ENCODE measurements at regions of chr5 and their contacts with region 1.

Region 1: DNA sequence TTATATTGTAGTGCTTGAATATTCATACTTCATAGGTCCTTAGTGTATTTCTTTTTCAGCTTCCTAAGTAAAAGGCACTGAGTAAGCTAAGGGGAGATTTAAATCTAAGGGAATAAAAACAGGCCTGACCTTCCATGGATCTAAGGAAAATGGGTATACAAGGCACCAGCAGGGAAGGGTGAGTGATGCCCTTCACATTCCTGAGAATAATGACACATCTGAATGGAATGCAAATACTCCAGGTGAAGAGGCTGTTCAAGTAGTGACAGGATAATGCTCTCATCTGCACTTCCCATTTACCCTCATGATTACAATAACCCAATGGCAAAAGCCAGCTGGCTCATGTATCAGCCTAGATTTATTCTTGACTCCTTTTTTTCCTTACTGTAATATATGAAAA is 216.2 kb upstream of the ACTBL2 start:
- DNase-seq: no peak
- ATAC-seq: no peak
- H3K4me3 ChIP-seq: no peak overlapping the region
- H3K27ac ChIP-seq: peak overlapping the region in 11 of 12 donors; percentile 19 to 88 (median 76)
- H3K4me1 ChIP-seq: peaks cover 2 to 55% (median 30%) of the 10 kb centered on the region in 12 donors
- H3K27me3 ChIP-seq: no peaks in the 10 kb centered on the region
- CTCF ChIP-seq: no peak
- POLR2A ChIP-seq: no peak

Region 2: GRCh38 chr5:57650360-57651069 is 48.3 kb before region 1 on chr5:
- intact Hi-C with region 1: loop called in 1 of 10 experiments (anchors 2 kb)
- DNase-seq: no peak
- ATAC-seq: peak in 2 of 4 donors; percentile 50 to 61
- H3K4me3 ChIP-seq: no peak overlapping the region
- H3K27ac ChIP-seq: no peak overlapping the region
- H3K4me1 ChIP-seq: peaks cover 0 to 16% (median 0%) of the 10 kb centered on the region in 12 donors
- H3K27me3 ChIP-seq: no peaks in the 10 kb centered on the region
- CTCF ChIP-seq: peak; percentile 33 to 61 (median 51)
- POLR2A ChIP-seq: no peak

Measured in heart left ventricle (tissue), 16 donors.